Lower leg skin (tissue), 4 donors: ENCODE measurements at regions of chr10 and their contacts with region 1.

Region 1: DNA sequence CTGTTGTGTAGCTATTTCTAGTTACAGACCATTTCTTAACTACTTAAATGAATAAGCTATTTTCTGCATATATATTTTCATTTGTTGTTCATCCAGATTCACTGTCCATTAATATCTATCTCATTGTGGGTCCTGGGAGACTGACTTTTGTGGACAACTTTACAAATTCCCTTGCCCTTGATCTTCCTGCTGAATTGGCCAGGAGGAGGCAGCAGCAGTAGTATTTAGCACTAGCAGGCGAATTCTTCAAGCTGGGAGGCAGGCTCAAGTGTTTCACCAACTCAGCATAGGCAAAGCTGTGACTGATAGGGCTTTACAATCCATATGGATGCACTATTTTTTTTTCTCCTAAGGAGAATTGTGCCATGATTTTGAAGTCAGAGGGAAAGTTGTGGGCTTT is 461.0 kb upstream of the NRG3 start:
- DNase-seq: no peak
- H3K4me3 ChIP-seq: no peak overlapping the region
- CTCF ChIP-seq: no peak
- POLR2A ChIP-seq: no peak

Region 2: GRCh38 chr10:81386817-81387216 is 27.2 kb before region 1 on chr10:
- intact Hi-C with region 1: loop called (anchors 2 kb)
- DNase-seq: no peak
- H3K4me3 ChIP-seq: no peak overlapping the region
- CTCF ChIP-seq: no peak
- POLR2A ChIP-seq: no peak

Region 3: DNA sequence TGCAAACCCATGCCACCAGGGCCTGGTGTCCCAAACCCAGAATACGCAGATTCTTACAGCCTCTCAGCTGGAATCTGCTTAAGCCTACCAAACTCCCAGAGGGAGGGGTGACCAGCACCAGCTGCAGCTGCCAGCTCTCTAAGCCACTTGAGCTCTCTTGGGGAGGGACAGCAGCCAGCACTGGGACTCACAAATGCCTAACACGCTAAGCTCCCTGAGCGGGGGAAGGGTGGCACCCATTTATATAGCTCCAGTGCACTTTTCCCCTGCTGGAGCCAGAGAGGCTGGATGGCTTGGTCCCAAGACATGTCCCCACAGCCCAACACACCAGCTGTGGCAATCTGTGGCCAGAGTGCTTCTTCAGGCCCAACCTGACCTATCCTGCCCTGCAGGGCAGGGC is 134.1 kb after region 1 on chr10:
- intact Hi-C with region 1: no loop called
- DNase-seq: no peak
- H3K4me3 ChIP-seq: no peak overlapping the region
- CTCF ChIP-seq: no peak
- POLR2A ChIP-seq: no peak